Mammary epithelial cell (primary cell): ENCODE measurements at regions of chr1 and their contacts with region 1.

Region 1: GRCh38 chr1:32448773-32449456 is 16.0 kb upstream of the ZBTB8B start:
- DNase-seq: no peak
- H3K4me3 ChIP-seq: no peak overlapping the region
- H3K27ac ChIP-seq: no peak overlapping the region
- H3K4me1 ChIP-seq: peaks cover 12% of the 10 kb centered on the region
- H3K27me3 ChIP-seq: no peaks in the 10 kb centered on the region
- CTCF ChIP-seq: peak; percentile 28 to 36

Region 2: GRCh38 chr1:32291145-32291707 is 157.7 kb before region 1 on chr1:
- CTCF ChIA-PET with region 1: no interaction called
- dilution Hi-C with region 1: no loop called
- in situ Hi-C with region 1: no loop called
- intact Hi-C with region 1: no loop called
- DNase-seq: peak; percentile 61
- H3K4me3 ChIP-seq: peak overlapping the region; percentile 85 to 98 (median 91)
- H3K27ac ChIP-seq: peak overlapping the region; percentile 41
- H3K4me1 ChIP-seq: peaks cover 6% of the 10 kb centered on the region
- H3K27me3 ChIP-seq: no peaks in the 10 kb centered on the region
- CTCF ChIP-seq: no peak

Region 3: DNA sequence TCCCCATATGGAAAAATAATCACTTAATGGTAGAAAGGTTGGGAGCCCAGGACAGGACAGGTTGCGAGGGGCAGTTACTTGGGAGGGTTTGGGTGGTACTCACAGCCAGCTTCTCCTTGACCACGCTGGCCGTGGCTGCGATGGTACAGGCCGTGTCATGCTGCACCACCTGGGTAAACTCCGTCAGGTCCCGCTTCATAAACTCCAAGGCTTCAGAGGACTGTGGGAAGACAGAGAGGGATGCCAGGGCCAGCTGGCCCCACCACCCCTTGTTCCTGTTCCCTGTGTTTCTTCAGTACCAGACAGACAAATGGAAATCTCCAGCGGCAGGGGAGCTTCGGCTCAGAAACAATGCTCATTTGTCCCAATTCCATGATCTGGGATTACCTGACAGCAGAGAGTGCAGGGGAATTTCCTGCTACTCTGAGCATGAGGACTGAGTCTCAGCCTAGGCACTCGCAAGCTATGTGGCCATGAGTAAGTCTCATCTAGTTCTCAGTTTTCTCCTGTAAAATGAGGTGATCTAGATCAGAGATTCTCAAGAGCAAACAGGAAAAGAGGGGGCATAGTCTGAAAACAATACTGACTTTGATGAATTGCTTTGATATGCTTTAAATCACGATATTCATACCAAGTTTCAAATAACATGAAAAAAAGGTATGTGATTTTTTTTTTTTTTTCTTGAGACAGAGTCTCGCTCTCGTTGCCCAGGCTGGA is 62.1 kb before region 1 on chr1:
- CTCF ChIA-PET with region 1: no interaction called
- dilution Hi-C with region 1: no loop called
- in situ Hi-C with region 1: no loop called
- intact Hi-C with region 1: no loop called
- DNase-seq: no peak
- H3K4me3 ChIP-seq: no peak overlapping the region
- H3K27ac ChIP-seq: no peak overlapping the region
- H3K4me1 ChIP-seq: no peaks in the 10 kb centered on the region
- H3K27me3 ChIP-seq: no peaks in the 10 kb centered on the region
- CTCF ChIP-seq: no peak

Region 4: GRCh38 chr1:32400876-32401631 is 47.9 kb before region 1 on chr1:
- CTCF ChIA-PET with region 1: no interaction called
- dilution Hi-C with region 1: no loop called
- in situ Hi-C with region 1: no loop called
- intact Hi-C with region 1: loop called (anchors 1 kb)
- DNase-seq: peak; percentile 63
- H3K4me3 ChIP-seq: no peak overlapping the region
- H3K27ac ChIP-seq: no peak overlapping the region
- H3K4me1 ChIP-seq: no peaks in the 10 kb centered on the region
- H3K27me3 ChIP-seq: no peaks in the 10 kb centered on the region
- CTCF ChIP-seq: peak; percentile 94 to 95

Region 5: DNA sequence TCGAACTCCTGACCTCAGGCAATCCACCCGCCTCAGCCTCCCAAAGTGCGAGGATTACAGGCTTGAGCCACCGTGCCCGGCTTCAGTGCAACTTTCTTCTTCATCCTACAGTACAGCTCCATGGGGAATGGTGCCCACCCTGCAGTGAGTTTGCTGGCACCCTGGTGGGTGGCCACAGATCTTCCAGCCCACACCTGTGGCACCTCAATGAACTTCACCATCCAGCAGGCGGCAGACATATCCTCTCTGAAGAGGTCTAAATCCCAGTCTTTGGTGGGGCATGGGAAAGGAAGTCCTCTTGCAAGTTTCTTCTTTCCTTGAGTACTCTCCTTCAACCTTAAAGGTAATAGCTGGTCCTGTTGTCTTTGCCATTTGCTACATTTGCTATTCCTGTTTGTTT is 72.2 kb after region 1 on chr1:
- CTCF ChIA-PET with region 1: interaction called, 9 read pairs
- dilution Hi-C with region 1: no loop called
- in situ Hi-C with region 1: no loop called
- intact Hi-C with region 1: loop called (anchors 1 kb)
- DNase-seq: no peak
- H3K4me3 ChIP-seq: no peak overlapping the region
- H3K27ac ChIP-seq: no peak overlapping the region
- H3K4me1 ChIP-seq: no peaks in the 10 kb centered on the region
- H3K27me3 ChIP-seq: no peaks in the 10 kb centered on the region
- CTCF ChIP-seq: peak in 1 of 2 donors; percentile 18

Region 6: GRCh38 chr1:32619701-32620485 is 171.0 kb after region 1 on chr1:
- CTCF ChIA-PET with region 1: no interaction called
- dilution Hi-C with region 1: no loop called
- in situ Hi-C with region 1: no loop called
- intact Hi-C with region 1: loop called (anchors 5 kb)
- DNase-seq: no peak
- H3K4me3 ChIP-seq: no peak overlapping the region
- H3K27ac ChIP-seq: no peak overlapping the region
- H3K4me1 ChIP-seq: no peaks in the 10 kb centered on the region
- H3K27me3 ChIP-seq: no peaks in the 10 kb centered on the region
- CTCF ChIP-seq: peak in 1 of 2 donors; percentile 20

Region 7: GRCh38 chr1:32773018-32773763 is 324.3 kb after region 1 on chr1:
- CTCF ChIA-PET with region 1: no interaction called
- dilution Hi-C with region 1: no loop called
- in situ Hi-C with region 1: no loop called
- intact Hi-C with region 1: loop called (anchors 5 kb)
- DNase-seq: peak; percentile 75
- H3K4me3 ChIP-seq: no peak overlapping the region
- H3K27ac ChIP-seq: no peak overlapping the region
- H3K4me1 ChIP-seq: peaks cover 35% of the 10 kb centered on the region
- H3K27me3 ChIP-seq: no peaks in the 10 kb centered on the region
- CTCF ChIP-seq: peak; percentile 93 to 95